ENCODE measurements at regions of chr11 and their contacts with region 1.

Region 1: GRCh38 chr11:57456960-57457642 is 3.2 kb upstream of the RTN4RL2 start:
- DNase-seq: no peak
- H3K4me3 ChIP-seq: no peak overlapping the region
- H3K27me3 ChIP-seq: peaks cover 27% of the 10 kb centered on the region
- CTCF ChIP-seq: peak; percentile 100

Region 2: GRCh38 chr11:57249384-57250319 is 207.4 kb before region 1 on chr11:
- CTCF ChIA-PET with region 1: no interaction called
- POLR2A ChIA-PET with region 1: no interaction called
- DNase-seq: no peak
- H3K4me3 ChIP-seq: no peak overlapping the region
- H3K27me3 ChIP-seq: peaks cover 2% of the 10 kb centered on the region; the same call in 1 of the 2 replicates
- CTCF ChIP-seq: peak; percentile 87

Region 3: DNA sequence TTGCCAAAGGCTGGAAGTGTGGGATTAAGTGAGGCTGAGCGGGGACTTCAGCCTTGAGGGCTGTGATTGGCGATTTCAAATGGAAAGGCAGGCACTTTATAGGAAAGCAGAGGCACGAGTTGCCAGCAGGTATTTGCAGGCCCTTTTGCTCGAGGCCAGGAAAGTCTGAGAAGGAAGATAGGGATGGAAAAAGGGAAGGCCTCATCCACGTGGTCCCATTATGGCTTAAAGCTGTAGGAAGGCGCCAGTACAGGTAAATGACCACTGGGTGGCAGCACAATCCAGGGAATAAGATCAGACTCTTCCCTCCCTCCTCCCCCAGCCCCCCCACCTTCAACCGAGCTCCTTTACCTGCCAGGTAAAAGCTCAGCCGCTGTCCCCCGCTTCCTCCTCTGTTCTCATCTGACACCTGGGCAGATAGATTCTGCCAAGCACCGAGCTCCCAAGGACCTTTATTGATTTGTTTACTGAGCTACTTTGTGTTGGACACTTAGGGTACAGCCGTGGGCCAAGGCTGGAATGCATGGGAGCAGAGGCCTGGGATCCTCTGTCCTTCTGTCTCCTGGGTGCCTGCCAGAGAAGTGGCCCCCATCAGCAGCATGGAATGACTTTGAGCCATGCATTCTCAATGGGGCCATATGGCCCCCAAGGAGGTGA is 111.4 kb before region 1 on chr11:
- CTCF ChIA-PET with region 1: interaction called, 20 read pairs
- POLR2A ChIA-PET with region 1: no interaction called
- DNase-seq: no peak
- H3K4me3 ChIP-seq: no peak overlapping the region
- H3K27me3 ChIP-seq: no peaks in the 10 kb centered on the region; the same call in 1 of the 2 replicates
- CTCF ChIP-seq: peak; percentile 72

Region 4: GRCh38 chr11:57436031-57436430 is 21.1 kb before region 1 on chr11:
- CTCF ChIA-PET with region 1: interaction called, 20 read pairs
- POLR2A ChIA-PET with region 1: no interaction called
- DNase-seq: no peak
- H3K4me3 ChIP-seq: no peak overlapping the region
- H3K27me3 ChIP-seq: no peaks in the 10 kb centered on the region
- CTCF ChIP-seq: no peak

Region 5: GRCh38 chr11:57467508-57468157 is 10.5 kb after region 1 on chr11:
- CTCF ChIA-PET with region 1: interaction called, 68 read pairs
- POLR2A ChIA-PET with region 1: no interaction called
- DNase-seq: no peak
- H3K4me3 ChIP-seq: no peak overlapping the region
- H3K27me3 ChIP-seq: 0 out of 2 replicates have a peak, but pooled peaks cover 5% of the 10 kb centered on the region
- CTCF ChIP-seq: no peak

Region 6: GRCh38 chr11:57480409-57481137 is 23.5 kb after region 1 on chr11:
- CTCF ChIA-PET with region 1: interaction called, 188 read pairs
- POLR2A ChIA-PET with region 1: no interaction called
- DNase-seq: no peak
- H3K4me3 ChIP-seq: no peak overlapping the region
- H3K27me3 ChIP-seq: peaks cover 14% of the 10 kb centered on the region
- CTCF ChIP-seq: peak; percentile 75

Region 7: DNA sequence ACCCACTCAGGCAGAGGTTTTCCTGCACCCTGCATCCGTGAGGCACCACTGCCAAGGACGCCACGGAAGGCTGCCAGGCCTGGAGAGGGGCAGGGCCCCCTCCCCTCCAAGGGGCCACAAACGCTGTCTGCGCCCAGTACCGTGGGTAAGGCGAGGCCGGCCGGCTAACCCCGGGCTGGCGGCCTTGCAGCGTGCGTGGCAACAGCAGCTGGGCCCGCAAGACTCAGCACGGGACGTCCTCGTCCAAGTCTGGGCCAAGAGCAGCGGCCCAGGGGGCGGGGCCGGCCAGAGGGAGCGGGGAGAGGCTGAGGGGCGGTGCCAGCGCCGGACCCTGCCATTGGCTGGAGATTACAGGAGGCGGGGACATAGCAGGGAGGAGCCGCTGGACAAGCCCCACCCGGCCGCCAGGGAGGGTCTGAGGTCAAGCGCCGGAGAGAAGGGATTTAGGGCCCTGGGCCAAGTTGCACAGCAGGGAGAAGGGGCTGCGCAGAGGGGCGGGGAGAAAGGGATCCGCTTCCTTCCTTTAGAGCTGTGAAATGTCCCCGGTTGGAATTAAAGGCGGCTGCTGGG is 42.4 kb after region 1 on chr11:
- CTCF ChIA-PET with region 1: interaction called, 24 read pairs
- POLR2A ChIA-PET with region 1: no interaction called
- DNase-seq: peak; percentile 52
- H3K4me3 ChIP-seq: no peak overlapping the region
- H3K27me3 ChIP-seq: no peaks in the 10 kb centered on the region
- CTCF ChIP-seq: no peak

Region 8: GRCh38 chr11:57530596-57531507 is 73.8 kb after region 1 on chr11 and contains the start of gene TIMM10:
- CTCF ChIA-PET with region 1: interaction called, 148 read pairs
- POLR2A ChIA-PET with region 1: no interaction called
- DNase-seq: peak; percentile 91
- H3K4me3 ChIP-seq: peak within 1 kb of the TSS; percentile 91
- H3K27me3 ChIP-seq: no peaks in the 10 kb centered on the region
- CTCF ChIP-seq: no peak
- polyA plus RNA-seq, gene TIMM10: 90.5 and 91.7 TPM in 2 replicates